ENCODE measurements at regions of chr1 and their contacts with region 1.

Region 1: GRCh38 chr1:39196244-39197215 is 8.0 kb upstream of the MACF1 start:
- DNase-seq: peak; percentile 82
- ATAC-seq: peak; percentile 47
- H3K4me3 Mint-ChIP-seq: peak overlapping the region; percentile 71
- H3K27ac Mint-ChIP-seq: peak overlapping the region; percentile 98
- H3K4me1 Mint-ChIP-seq: peaks cover 80% of the 10 kb centered on the region
- H3K27me3 Mint-ChIP-seq: no peaks in the 10 kb centered on the region

Region 2: GRCh38 chr1:39132505-39133339 is 63.8 kb before region 1 on chr1:
- CTCF ChIA-PET with region 1: interaction called, 21 read pairs
- POLR2A ChIA-PET with region 1: no interaction called
- DNase-seq: no peak
- ATAC-seq: no peak
- H3K4me3 Mint-ChIP-seq: no peak overlapping the region
- H3K27ac Mint-ChIP-seq: no peak overlapping the region
- H3K4me1 Mint-ChIP-seq: peaks cover 4% of the 10 kb centered on the region
- H3K27me3 Mint-ChIP-seq: no peaks in the 10 kb centered on the region

Region 3: GRCh38 chr1:39214998-39215873 is 18.7 kb after region 1 on chr1:
- CTCF ChIA-PET with region 1: interaction called, 540 read pairs
- POLR2A ChIA-PET with region 1: interaction called, 67 read pairs
- DNase-seq: peak; percentile 69
- ATAC-seq: peak; percentile 78
- H3K4me3 Mint-ChIP-seq: peak overlapping the region; percentile 89
- H3K27ac Mint-ChIP-seq: peak overlapping the region; percentile 90
- H3K4me1 Mint-ChIP-seq: peaks cover 51% of the 10 kb centered on the region
- H3K27me3 Mint-ChIP-seq: no peaks in the 10 kb centered on the region

Region 4: GRCh38 chr1:39250460-39251240 is 54.1 kb after region 1 on chr1:
- CTCF ChIA-PET with region 1: interaction called, 517 read pairs
- POLR2A ChIA-PET with region 1: interaction called, 3 read pairs
- DNase-seq: no peak
- ATAC-seq: no peak
- H3K4me3 Mint-ChIP-seq: no peak overlapping the region
- H3K27ac Mint-ChIP-seq: no peak overlapping the region
- H3K4me1 Mint-ChIP-seq: peaks cover 5% of the 10 kb centered on the region
- H3K27me3 Mint-ChIP-seq: no peaks in the 10 kb centered on the region

Region 5: DNA sequence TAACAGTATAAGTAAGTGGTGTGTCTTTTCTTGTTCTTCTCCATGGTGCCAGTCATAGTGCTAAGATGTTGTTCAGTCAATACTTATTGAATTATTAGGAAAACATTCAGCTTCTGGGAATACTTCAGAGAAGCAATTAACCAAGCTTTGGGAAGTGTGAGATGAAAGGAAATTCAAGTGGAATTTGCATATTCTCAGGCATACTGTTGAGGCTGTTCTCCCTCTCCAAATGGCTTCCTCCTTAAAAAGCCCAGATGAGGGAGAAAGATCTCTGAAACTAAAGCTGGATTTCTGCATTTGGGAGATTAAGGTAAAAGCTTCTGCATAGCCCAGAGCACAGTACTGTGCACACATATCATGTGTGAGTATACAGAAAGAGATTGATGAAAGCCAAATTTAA is 81.3 kb after region 1 on chr1:
- CTCF ChIA-PET with region 1: interaction called, 29 read pairs
- POLR2A ChIA-PET with region 1: no interaction called
- DNase-seq: no peak
- ATAC-seq: no peak
- H3K4me3 Mint-ChIP-seq: no peak overlapping the region
- H3K27ac Mint-ChIP-seq: no peak overlapping the region
- H3K4me1 Mint-ChIP-seq: peaks cover 5% of the 10 kb centered on the region
- H3K27me3 Mint-ChIP-seq: no peaks in the 10 kb centered on the region

Region 6: GRCh38 chr1:39408641-39409054 is 212.1 kb after region 1 on chr1:
- CTCF ChIA-PET with region 1: interaction called, 30 read pairs
- POLR2A ChIA-PET with region 1: no interaction called
- DNase-seq: peak; percentile 89
- ATAC-seq: peak; percentile 89
- H3K4me3 Mint-ChIP-seq: peak overlapping the region; percentile 84
- H3K27ac Mint-ChIP-seq: no peak overlapping the region
- H3K4me1 Mint-ChIP-seq: peaks cover 51% of the 10 kb centered on the region
- H3K27me3 Mint-ChIP-seq: no peaks in the 10 kb centered on the region